ENCODE measurements at regions of chr19 and their contacts with region 1.

Region 1: DNA sequence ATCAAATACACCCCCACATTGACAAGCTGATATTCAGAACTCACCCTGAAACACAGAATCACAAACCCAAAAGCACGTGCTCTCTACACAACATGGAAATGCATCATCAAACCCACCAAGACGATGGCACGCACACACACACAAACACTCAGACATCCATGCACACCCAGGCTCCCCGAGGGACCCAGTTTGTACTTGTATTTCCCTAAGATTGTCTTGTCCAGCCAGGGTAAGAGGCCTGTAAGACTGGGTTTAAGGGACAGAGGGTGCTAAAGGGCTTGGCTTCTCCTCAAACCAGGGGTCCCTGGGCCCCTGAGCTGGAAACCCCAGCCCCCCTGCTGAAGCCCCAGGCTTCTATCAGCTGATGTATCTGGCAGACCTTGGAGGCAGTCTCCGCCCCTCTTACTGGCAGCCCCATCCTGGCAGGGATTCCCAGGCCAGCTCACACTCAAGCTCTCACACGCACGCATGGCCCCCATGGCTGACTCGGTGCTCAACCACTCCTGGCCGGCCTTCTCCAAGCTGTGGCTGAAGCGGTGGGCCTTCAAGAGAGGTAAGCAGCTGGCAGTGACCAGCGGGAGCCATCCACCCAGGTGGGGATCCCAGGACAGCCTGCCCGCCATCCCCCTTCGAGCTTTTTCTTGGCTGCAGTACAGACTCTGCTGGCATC is 6.5 kb downstream of the ARHGEF18 start:
- DNase-seq: no peak
- H3K4me3 ChIP-seq: no peak overlapping the region
- H3K27ac ChIP-seq: no peak overlapping the region
- H3K4me1 ChIP-seq: no peaks in the 10 kb centered on the region
- H3K27me3 ChIP-seq: no peaks in the 10 kb centered on the region
- CTCF ChIP-seq: no peak
- EP300 ChIP-seq: no peak
- RAD21 ChIP-seq: no peak

Region 2: DNA sequence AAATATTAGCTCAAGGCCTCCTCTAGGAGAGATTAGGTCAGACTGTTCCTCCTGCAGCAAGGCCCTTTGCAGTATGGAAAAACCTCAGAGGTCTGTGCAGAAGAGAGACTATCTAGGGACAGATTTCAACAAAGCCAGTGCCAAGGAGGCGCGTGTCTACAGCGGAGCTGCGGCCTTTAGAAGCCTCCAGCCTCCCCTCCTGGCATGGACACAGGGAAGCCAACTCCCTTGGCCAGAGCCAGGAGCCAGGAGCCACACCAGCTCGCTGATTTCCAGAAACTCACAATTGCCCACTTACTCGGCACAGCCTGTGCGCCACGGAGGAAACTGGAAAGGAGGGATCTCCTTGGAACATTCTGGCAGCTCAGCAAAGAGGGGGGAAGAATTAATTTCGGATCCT is 124.5 kb before region 1 on chr19:
- CTCF ChIA-PET with region 1: no interaction called
- POLR2A ChIA-PET with region 1: no interaction called
- DNase-seq: no peak
- H3K4me3 ChIP-seq: no peak overlapping the region
- H3K27ac ChIP-seq: no peak overlapping the region
- H3K4me1 ChIP-seq: peaks cover 0 to 5% of the 10 kb centered on the region in 2 experiments; a peak in 1 of 4 replicates
- H3K27me3 ChIP-seq: no peaks in the 10 kb centered on the region
- CTCF ChIP-seq: no peak
- EP300 ChIP-seq: no peak
- RAD21 ChIP-seq: no peak

Region 3: DNA sequence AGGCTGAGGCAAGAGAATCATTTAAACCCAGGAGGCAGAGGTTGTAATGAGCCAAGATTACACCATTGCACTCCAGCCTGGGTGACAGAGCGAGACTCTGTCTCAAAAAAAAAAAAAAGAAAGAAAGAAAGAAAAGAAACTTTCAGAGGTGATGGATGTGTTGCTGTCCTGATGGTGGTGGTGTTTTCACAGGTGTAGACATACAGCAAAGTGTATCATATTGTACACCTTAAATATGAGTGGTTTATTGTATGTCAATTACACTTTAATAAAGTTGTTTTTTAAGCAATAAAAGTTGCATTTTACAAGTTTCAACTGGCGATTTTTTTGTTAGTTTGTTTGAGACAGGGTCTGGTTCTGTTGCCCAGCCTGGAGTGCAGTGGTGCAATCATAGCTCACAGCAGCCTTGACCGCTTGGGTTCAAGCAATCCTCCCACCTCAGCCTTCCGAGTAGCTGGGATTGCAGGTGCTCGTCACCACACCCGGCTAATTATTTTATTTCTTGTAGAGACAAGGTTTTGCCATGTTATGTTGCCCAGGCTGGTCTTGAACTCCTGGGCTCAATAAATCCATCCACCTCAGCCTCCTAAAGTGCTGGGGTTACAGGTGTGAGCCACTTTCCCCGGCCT is 47.6 kb before region 1 on chr19:
- CTCF ChIA-PET with region 1: no interaction called
- POLR2A ChIA-PET with region 1: no interaction called
- DNase-seq: no peak
- H3K4me3 ChIP-seq: no peak overlapping the region
- H3K27ac ChIP-seq: no peak overlapping the region
- H3K4me1 ChIP-seq: no peaks in the 10 kb centered on the region
- H3K27me3 ChIP-seq: no peaks in the 10 kb centered on the region; the same call in 1 of the 2 replicates
- CTCF ChIP-seq: no peak
- EP300 ChIP-seq: no peak
- RAD21 ChIP-seq: no peak

Region 4: GRCh38 chr19:7340959-7341837 is 14.1 kb before region 1 on chr19:
- CTCF ChIA-PET with region 1: interaction called, 23 read pairs
- POLR2A ChIA-PET with region 1: no interaction called
- DNase-seq: peak; percentile 71
- H3K4me3 ChIP-seq: peak overlapping the region in 1 of 2 experiments; percentile 18; a peak in 1 of 4 replicates
- H3K27ac ChIP-seq: no peak overlapping the region
- H3K4me1 ChIP-seq: no peaks in the 10 kb centered on the region
- H3K27me3 ChIP-seq: peaks cover 21% of the 10 kb centered on the region
- CTCF ChIP-seq: peak; percentile 93
- EP300 ChIP-seq: no peak
- RAD21 ChIP-seq: peak; percentile 97

Region 5: DNA sequence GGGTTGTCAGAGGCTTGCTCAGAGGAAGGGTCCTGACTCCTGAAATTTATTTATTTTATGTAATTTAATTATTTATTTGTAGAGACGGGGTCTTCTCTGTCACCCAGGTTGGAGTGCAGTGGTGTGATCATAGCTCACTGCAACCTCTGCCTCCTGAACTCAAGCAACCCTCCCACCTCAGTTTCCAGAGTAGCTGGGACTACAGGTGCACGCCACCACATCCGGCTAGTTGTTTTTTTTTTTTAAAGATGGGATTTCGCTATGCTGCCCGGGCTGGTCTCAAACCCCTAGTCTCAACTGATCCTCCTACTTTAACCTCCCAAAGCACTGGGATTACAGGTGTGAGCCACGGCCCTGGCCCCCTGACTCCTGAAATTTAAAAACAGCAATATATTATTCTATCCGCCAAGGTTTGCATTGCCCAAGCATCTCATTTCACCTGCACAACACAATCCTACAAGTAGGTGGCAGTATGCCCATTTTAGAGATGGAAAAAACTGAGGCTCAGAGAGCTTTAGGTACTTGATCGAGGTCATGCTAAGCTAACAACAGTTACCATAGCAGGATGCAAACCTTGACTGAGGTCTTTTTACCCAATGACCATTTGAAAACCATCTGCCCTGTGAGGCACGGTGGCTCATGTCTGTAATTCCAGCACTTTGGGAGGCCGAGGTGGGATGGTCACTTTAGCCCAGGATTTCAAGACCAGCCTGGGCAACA is 11.6 kb after region 1 on chr19:
- CTCF ChIA-PET with region 1: interaction called, 21 read pairs
- POLR2A ChIA-PET with region 1: no interaction called
- DNase-seq: no peak
- H3K4me3 ChIP-seq: no peak overlapping the region
- H3K27ac ChIP-seq: no peak overlapping the region
- H3K4me1 ChIP-seq: no peaks in the 10 kb centered on the region; a peak in 2 of 4 replicates
- H3K27me3 ChIP-seq: no peaks in the 10 kb centered on the region
- CTCF ChIP-seq: peak; percentile 53
- EP300 ChIP-seq: no peak
- RAD21 ChIP-seq: peak; percentile 47

Region 6: DNA sequence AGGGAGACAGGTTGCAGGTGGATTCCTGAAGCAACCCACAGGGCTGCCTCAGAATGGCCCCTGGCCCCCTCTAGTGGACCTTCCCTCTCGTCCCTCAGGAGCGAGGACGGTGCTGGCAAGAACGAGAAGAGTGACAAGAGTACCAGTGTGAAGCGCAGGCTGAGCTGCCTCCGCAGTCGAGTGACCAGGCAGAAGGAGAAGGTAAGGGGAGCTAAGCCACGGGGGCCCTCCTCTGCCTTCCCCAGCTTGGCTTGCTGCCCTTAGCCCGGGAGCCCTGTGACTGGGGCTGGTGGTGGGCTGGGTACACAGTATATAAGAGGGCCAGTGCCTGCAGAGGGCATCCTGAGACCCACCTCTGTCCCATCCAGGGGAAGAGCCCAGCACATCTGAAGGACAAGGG is 27.4 kb after region 1 on chr19:
- CTCF ChIA-PET with region 1: interaction called, 44 read pairs
- POLR2A ChIA-PET with region 1: no interaction called
- DNase-seq: no peak
- H3K4me3 ChIP-seq: no peak overlapping the region
- H3K27ac ChIP-seq: no peak overlapping the region
- H3K4me1 ChIP-seq: no peaks in the 10 kb centered on the region
- H3K27me3 ChIP-seq: no peaks in the 10 kb centered on the region
- CTCF ChIP-seq: no peak
- EP300 ChIP-seq: no peak
- RAD21 ChIP-seq: no peak

Region 7: GRCh38 chr19:7522072-7522922 is 167.0 kb after region 1 on chr19 and contains the start of gene MCOLN1:
- CTCF ChIA-PET with region 1: interaction called, 14 read pairs
- POLR2A ChIA-PET with region 1: no interaction called
- DNase-seq: peak; percentile 100
- H3K4me3 ChIP-seq: peak within 1 kb of the TSS; percentile 79 to 89
- H3K27ac ChIP-seq: peak within 1 kb of the TSS; percentile 38 to 90; a peak in 3 of 4 replicates
- H3K4me1 ChIP-seq: peaks cover 5 to 17% of the 10 kb centered on the region in 2 experiments; a peak in 2 of 4 replicates
- H3K27me3 ChIP-seq: no peaks in the 10 kb centered on the region
- CTCF ChIP-seq: no peak
- EP300 ChIP-seq: no peak
- RAD21 ChIP-seq: no peak
- polyA plus RNA-seq, gene MCOLN1: 28.4 and 28.9 TPM in 2 replicates

Measured in SK-N-SH (cell line).